ENCODE measurements at regions of chr12 and their contacts with region 1.

Region 1: DNA sequence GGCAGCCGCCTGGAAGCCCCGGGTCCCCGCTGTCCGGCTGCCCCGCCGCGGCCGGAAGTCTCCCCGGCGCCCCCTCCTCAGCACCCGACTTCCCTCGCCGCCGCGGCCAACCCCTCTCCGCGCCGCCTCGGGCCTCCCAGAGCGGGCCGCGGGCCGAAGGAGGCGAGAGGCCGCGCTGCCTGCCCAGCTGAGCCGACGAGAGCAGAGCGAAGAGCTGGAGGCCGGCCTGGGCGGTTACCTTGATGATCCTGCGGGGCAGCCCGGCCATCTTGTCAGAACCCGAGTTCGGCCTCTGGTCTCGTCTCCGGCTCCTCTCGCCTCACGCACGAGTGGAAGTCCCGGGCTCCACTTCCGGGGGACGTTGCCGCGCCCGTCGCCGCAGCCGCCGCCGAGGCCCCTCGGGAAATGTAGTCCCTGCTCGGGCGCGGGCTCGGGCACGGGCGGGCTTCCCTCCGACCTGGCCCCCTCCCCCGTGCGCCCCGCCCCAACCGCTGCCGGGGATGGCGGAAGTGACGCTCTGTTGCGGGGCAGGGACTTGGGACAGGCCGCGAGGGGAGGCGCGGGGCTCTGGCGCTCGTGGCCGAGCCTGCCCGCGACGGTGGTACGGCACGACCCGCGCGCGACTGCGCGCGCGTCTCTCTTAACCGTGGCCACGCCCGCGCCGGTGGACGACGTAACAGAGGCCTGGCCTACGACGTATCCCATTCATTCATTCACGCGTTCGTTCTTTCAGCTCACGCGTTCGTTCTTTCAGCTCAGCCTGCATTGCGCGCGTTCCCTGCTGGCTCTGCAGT is at the start of gene UBE2N:
- DNase-seq: peak; percentile 95
- H3K4me3 Mint-ChIP-seq: peak within 1 kb of the TSS; percentile 96
- H3K27ac Mint-ChIP-seq: peak within 1 kb of the TSS; percentile 99
- H3K4me1 Mint-ChIP-seq: peaks cover 51% of the 10 kb centered on the region
- H3K27me3 Mint-ChIP-seq: no peaks in the 10 kb centered on the region
- total RNA-seq, gene UBE2N: 231 and 239 TPM in 2 replicates

Region 2: GRCh38 chr12:93156094-93156716 is 285.6 kb before region 1 on chr12:
- intact Hi-C with region 1: no loop called
- DNase-seq: no peak
- H3K4me3 Mint-ChIP-seq: no peak overlapping the region
- H3K27ac Mint-ChIP-seq: no peak overlapping the region
- H3K4me1 Mint-ChIP-seq: no peaks in the 10 kb centered on the region
- H3K27me3 Mint-ChIP-seq: peaks cover 10% of the 10 kb centered on the region

Region 3: DNA sequence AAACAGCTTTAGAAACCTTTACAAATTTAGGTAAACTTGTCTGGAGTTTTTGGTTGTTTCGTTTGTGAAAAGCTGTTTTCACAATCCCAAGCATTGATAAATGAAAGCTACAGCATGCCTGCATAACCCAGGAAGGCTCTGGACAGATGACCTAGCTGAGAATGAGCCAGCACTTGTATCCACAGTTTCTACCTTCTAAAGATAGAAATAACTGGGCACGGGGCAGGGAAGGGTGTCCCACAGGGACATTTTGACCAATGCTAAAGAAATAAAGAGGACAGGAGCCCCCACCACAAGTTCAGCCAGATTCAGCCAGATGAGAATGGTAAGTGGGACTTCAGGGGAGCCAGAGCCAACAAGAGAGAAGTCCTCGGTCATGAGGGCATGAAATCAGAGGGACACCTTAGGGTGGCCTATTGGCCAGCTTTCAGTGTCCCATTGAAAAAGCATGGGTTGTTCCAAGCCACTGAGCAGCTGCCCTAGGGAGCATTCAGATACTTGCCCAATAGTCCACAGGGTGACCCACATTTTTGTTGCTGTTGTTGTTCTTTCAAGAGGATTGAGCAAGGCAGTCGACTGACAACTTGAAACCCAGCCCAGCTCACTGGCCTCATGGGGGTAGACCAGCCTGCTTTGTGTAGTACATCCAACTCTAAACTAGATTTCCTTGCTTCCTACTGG is 204.4 kb before region 1 on chr12:
- intact Hi-C with region 1: no loop called
- DNase-seq: no peak
- H3K4me3 Mint-ChIP-seq: no peak overlapping the region
- H3K27ac Mint-ChIP-seq: no peak overlapping the region
- H3K4me1 Mint-ChIP-seq: no peaks in the 10 kb centered on the region
- H3K27me3 Mint-ChIP-seq: no peaks in the 10 kb centered on the region

Region 4: DNA sequence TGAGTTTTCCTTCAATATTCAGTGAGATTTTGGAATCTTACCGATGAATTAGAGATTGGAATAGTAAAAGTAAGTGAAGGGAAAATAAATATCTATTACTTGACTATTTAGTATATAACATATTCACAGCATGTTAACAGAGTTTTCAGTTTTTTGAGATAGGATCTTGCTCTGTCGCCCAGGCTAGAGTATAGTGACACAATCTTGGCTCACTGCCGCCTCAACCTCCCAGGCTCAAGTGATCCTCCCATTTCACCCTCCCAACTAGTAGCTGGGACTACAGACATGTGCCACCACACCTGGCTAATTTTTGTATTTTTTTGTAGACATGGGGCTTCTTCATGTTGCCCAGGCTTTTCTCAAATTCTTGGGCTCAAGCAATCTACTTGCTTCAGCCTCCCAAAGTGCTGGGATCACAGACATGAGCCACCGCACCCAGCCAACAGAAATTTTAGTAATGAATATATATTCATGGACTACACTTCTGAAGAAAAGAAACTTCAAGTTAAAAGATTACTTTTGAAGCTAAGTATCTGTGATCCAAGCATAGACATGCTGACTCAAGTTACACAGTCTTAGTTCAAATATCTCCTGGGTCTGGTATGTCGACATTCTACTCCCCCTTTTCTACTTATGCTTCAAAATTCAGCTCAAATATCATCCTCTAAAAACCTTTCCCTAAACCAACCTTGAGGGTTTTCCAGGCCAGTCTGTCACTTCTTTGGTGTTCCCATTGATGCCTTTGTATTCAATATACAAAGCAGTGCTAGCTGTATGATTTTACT is 13.8 kb before region 1 on chr12:
- intact Hi-C with region 1: loop called (anchors 1 kb)
- DNase-seq: no peak
- H3K4me3 Mint-ChIP-seq: no peak overlapping the region
- H3K27ac Mint-ChIP-seq: peak overlapping the region; percentile 36
- H3K4me1 Mint-ChIP-seq: peaks cover 72% of the 10 kb centered on the region
- H3K27me3 Mint-ChIP-seq: peaks cover 2% of the 10 kb centered on the region

Region 5: DNA sequence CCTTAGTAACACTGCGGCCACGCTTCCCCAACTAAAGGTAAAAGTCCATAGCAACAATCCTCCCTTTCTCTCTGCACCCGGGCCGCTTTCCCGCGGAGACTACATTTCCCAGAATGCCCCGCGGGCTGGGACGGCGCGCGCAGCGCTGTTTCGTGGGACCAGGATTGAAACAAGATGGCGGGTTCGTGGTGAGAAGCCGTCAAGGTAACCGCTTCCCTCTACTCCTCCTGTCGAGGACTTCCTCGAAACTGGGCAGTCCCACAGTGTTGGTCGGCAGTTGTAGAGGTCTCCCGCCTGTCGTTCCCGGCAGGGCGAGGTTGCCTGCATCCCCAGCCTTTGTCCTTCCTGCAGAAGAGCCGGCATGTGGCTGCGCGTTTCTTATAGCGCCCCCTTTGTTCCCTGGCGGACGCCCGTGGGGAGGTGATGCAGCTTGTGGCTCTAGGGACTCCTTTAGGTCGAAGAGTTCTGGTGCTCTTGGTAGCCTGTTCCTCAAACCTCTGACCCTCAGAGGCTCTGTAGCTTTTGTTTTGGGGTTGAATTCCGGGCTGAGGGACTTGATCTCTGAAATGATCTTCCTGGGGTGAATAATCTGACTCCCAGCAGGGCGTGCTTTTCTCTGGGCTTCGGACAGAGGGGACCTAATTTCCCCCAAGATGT is 25.7 kb after region 1 on chr12 and contains the start of gene MRPL42:
- intact Hi-C with region 1: loop called (anchors 1 kb)
- DNase-seq: peak; percentile 90
- H3K4me3 Mint-ChIP-seq: peak within 1 kb of the TSS; percentile 96
- H3K27ac Mint-ChIP-seq: peak within 1 kb of the TSS; percentile 93
- H3K4me1 Mint-ChIP-seq: peaks cover 43% of the 10 kb centered on the region
- H3K27me3 Mint-ChIP-seq: no peaks in the 10 kb centered on the region
- total RNA-seq, gene MRPL42: 83.2 and 87.0 TPM in 2 replicates